ENCODE measurements at regions of chr19 and their contacts with region 1.

Region 1: DNA sequence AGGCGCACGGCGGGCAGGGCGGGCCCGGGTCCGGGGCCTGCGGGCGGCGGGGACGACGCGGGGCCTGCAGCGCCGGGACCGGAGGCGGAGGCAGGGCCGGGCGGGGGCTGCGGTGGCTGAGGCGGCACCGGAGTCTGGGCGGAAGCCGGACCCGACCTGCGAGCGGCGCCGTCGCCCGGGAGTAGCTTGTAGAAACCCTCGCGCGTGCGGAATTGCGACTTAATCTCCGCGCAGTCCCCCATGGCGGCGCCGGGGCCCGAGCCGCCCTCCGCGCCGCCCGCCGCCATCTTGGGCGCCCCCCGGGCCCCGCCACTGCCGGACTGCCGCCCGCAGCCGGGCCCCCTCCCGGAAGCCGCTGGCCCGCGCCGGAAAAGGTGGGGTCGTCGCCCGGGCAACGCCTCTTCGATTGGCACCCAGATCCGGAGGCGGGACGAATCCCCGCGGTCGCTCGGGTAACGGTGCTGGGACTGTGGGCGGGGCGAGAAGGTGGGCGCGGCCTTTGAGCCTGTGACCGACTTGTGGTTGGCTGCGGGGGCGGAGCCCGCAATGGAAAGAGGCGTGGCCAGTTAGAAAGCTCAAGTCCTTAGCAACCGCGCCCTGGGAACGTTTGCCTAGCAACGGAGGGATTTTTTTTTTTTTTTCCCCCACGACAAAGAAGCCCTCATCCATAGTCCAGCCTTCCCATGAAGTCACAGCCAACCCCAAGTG is at the start of gene DMWD:
- DNase-seq: peak; percentile 99
- CTCF ChIP-seq: no peak

Region 2: GRCh38 chr19:45753546-45753945 is 39.1 kb before region 1 on chr19:
- CTCF ChIA-PET with region 1: no interaction called
- POLR2A ChIA-PET with region 1: no interaction called
- DNase-seq: no peak
- CTCF ChIP-seq: peak; percentile 19

Region 3: GRCh38 chr19:45779231-45780145 is 13.1 kb before region 1 on chr19:
- CTCF ChIA-PET with region 1: interaction called, 18 read pairs
- POLR2A ChIA-PET with region 1: no interaction called
- DNase-seq: peak; percentile 96
- CTCF ChIP-seq: peak; percentile 76

Measured in GM10248 (cell line).